Mammary epithelial cell (primary cell): ENCODE measurements at regions of chr3 and their contacts with region 1.

Region 1: DNA sequence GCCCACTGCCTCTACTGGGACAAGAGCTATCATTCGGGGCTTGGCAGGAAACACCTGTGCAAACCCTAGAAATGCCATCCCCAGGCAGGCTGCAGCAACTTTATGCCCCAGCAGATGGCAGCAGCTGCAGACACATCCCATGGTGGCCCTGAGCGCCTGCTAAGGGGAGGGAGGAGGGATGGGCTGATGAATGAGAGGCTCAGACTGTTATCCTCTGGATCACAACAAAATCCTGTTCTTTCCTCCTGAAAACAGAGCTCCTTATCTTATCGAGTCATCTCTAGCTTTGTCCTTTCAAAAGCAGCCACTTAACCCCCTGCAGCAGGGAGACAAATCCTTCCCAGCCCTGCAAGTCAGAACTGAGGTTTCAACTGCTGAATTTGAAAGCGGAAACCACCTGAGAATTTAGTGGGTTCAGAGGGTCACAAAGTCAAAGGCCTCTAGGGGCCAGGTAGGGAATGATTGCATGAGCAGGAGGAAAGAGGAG is 90.6 kb upstream of the PROK2 start:
- DNase-seq: peak; percentile 51
- H3K4me3 ChIP-seq: no peak overlapping the region
- H3K27ac ChIP-seq: no peak overlapping the region
- H3K4me1 ChIP-seq: no peaks in the 10 kb centered on the region
- H3K27me3 ChIP-seq: no peaks in the 10 kb centered on the region
- CTCF ChIP-seq: peak; percentile 92 to 94

Region 2: GRCh38 chr3:71710906-71711494 is 164.5 kb before region 1 on chr3:
- CTCF ChIA-PET with region 1: interaction called, 4 read pairs
- dilution Hi-C with region 1: no loop called
- in situ Hi-C with region 1: loop called in 1 of 2 experiments (anchors 25 kb)
- intact Hi-C with region 1: loop called (anchors 5 kb)
- DNase-seq: peak; percentile 33
- H3K4me3 ChIP-seq: no peak overlapping the region
- H3K27ac ChIP-seq: no peak overlapping the region
- H3K4me1 ChIP-seq: peaks cover 6% of the 10 kb centered on the region
- H3K27me3 ChIP-seq: no peaks in the 10 kb centered on the region
- CTCF ChIP-seq: peak; percentile 63 to 64

Region 3: GRCh38 chr3:71926262-71926600 is 50.7 kb after region 1 on chr3:
- CTCF ChIA-PET with region 1: no interaction called
- dilution Hi-C with region 1: no loop called
- in situ Hi-C with region 1: no loop called
- intact Hi-C with region 1: loop called (anchors 1 kb)
- DNase-seq: peak; percentile 69
- H3K4me3 ChIP-seq: no peak overlapping the region
- H3K27ac ChIP-seq: no peak overlapping the region
- H3K4me1 ChIP-seq: peaks cover 7% of the 10 kb centered on the region
- H3K27me3 ChIP-seq: no peaks in the 10 kb centered on the region
- CTCF ChIP-seq: peak; percentile 83 to 86

Region 4: GRCh38 chr3:72270072-72270681 is 394.7 kb after region 1 on chr3:
- CTCF ChIA-PET with region 1: no interaction called
- dilution Hi-C with region 1: no loop called
- in situ Hi-C with region 1: no loop called
- intact Hi-C with region 1: loop called (anchors 1 kb)
- DNase-seq: peak; percentile 67
- H3K4me3 ChIP-seq: no peak overlapping the region
- H3K27ac ChIP-seq: no peak overlapping the region
- H3K4me1 ChIP-seq: peaks cover 10% of the 10 kb centered on the region
- H3K27me3 ChIP-seq: peaks cover 4% of the 10 kb centered on the region
- CTCF ChIP-seq: no peak